Caco-2 (cell line): ENCODE measurements at regions of chr6 and their contacts with region 1.

Region 1: DNA sequence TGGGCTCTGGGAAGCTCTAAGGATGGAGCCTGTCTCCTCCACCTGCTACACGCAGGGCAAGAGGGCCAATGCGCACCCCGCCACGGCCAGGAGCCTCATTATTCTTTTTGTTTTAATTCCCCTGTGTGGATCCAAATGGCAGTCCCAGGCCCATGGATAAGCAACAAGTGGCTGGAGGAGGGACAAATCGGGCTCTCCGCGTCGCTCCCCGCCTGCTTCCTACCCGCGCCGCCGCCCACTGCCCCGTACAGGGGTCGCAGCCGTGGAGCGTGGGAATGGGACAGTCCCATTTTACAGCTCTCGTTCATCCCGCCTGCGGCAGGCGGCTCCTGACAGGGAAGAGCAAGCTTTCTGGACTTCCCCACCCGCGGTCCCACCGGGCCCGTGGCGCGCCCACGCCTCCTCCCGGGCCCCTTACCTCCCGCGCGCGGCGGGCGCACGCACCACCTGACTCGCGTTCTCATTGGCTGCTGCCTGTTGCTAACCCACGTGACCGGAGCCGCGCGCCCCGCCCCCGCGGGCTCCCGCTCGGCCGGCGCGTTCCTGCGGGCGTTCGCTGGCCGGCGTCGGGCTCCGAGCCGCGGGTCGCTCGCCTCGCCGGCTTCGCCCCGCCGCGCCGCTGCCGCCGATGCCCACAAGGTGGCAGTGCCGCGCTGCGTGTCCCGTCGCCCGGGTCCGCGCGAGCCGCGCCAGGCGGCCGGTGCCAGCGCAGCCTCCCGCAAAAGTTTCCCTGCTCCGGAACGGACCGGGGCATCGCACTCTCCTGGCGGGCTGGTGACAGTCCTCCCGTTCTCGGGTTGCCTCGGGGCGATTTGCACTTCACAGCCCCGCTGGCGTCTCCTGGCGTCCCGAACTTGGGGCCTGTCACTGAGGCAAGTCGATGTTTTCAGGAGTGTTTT is 93.3 kb downstream of the CD83 start:
- DNase-seq: peak; percentile 89 to 96
- H3K4me3 ChIP-seq: peak overlapping the region; percentile 83
- H3K4me3 Mint-ChIP-seq: peak overlapping the region; percentile 70
- H3K27ac Mint-ChIP-seq: no peak overlapping the region
- H3K4me1 ChIP-seq: peaks cover 8% of the 10 kb centered on the region
- H3K4me1 Mint-ChIP-seq: peaks cover 6% of the 10 kb centered on the region
- H3K27me3 ChIP-seq: no peaks in the 10 kb centered on the region
- H3K27me3 Mint-ChIP-seq: no peaks in the 10 kb centered on the region
- CTCF ChIP-seq: peak; percentile 15 to 59

Region 2: DNA sequence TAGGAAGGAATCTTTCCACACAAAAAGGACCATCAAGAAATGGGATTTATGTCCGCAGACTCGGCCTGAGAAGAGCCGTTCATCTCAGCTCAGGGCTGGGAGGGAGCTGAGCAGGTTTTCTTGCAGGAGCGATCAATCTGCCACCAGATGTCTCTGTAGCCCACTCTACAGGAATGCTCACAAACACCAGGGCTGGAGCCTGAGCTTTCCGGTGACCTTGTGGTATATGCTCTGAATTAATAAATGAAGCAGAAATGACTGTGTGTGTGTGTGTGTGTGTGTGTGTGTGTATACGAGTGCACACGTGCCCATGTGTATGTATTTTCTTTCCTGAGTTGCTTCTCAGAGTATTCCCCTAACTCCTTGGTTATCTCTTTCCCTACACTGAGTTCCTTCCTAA is 81.3 kb before region 1 on chr6:
- CTCF ChIA-PET with region 1: interaction called, 6 read pairs
- POLR2A ChIA-PET with region 1: no interaction called
- intact Hi-C with region 1: loop called (anchors 10 kb)
- DNase-seq: peak; percentile 52 to 54
- H3K4me3 ChIP-seq: no peak overlapping the region
- H3K4me3 Mint-ChIP-seq: no peak overlapping the region
- H3K27ac Mint-ChIP-seq: no peak overlapping the region
- H3K4me1 ChIP-seq: no peaks in the 10 kb centered on the region
- H3K4me1 Mint-ChIP-seq: no peaks in the 10 kb centered on the region
- H3K27me3 ChIP-seq: no peaks in the 10 kb centered on the region
- H3K27me3 Mint-ChIP-seq: no peaks in the 10 kb centered on the region
- CTCF ChIP-seq: peak; percentile 33 to 79

Region 3: DNA sequence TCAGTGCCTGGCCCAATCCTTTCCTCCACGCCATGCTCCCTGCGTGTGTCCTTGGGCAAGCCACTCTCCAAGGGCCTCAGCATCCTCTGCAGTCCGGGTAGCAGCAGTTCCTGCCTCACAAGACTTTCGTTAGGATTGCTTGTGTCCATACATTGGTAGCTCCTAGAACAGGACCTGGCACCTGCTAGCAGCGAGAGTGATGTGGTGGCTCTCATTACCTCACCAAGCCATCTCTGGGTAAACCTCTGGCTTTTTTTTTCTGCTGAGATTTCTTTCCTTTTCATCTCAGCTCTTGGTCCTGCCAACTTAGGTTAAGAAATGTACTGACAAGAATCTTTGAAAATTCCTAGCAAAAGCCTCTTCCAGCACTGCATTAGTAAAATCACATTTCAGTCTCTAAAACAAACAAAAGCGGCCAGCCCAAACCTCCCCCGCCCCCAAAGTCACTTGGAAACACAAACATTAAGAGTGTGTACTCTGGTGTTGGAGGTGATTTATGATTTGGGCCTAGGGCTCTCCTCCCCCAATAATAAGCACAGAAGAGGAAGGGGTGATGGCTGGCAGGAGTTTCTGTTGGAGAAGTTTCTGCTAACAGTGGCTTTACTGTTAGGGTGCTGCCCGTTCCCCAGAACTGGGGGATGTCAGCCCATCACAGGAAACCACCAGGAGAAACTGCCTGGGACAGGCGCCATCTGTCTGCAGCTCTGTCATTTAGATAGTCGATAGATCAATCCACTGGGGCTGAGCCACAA is 105.9 kb after region 1 on chr6:
- CTCF ChIA-PET with region 1: interaction called, 6 read pairs
- POLR2A ChIA-PET with region 1: no interaction called
- intact Hi-C with region 1: loop called (anchors 10 kb)
- DNase-seq: peak; percentile 57 to 63
- H3K4me3 ChIP-seq: no peak overlapping the region
- H3K4me3 Mint-ChIP-seq: no peak overlapping the region
- H3K27ac Mint-ChIP-seq: peak overlapping the region; percentile 36
- H3K4me1 ChIP-seq: peaks cover 26% of the 10 kb centered on the region
- H3K4me1 Mint-ChIP-seq: peaks cover 8% of the 10 kb centered on the region
- H3K27me3 ChIP-seq: no peaks in the 10 kb centered on the region
- H3K27me3 Mint-ChIP-seq: no peaks in the 10 kb centered on the region
- CTCF ChIP-seq: peak; percentile 32 to 39

Region 4: GRCh38 chr6:14499841-14500240 is 288.9 kb after region 1 on chr6:
- CTCF ChIA-PET with region 1: no interaction called
- POLR2A ChIA-PET with region 1: no interaction called
- intact Hi-C with region 1: loop called (anchors 10 kb)
- DNase-seq: peak; percentile 58 to 65
- H3K4me3 ChIP-seq: no peak overlapping the region
- H3K4me3 Mint-ChIP-seq: no peak overlapping the region
- H3K27ac Mint-ChIP-seq: no peak overlapping the region
- H3K4me1 ChIP-seq: peaks cover 14% of the 10 kb centered on the region
- H3K4me1 Mint-ChIP-seq: peaks cover 14% of the 10 kb centered on the region
- H3K27me3 ChIP-seq: no peaks in the 10 kb centered on the region
- H3K27me3 Mint-ChIP-seq: no peaks in the 10 kb centered on the region
- CTCF ChIP-seq: no peak